Heart left ventricle (tissue), 16 donors: ENCODE measurements at regions of chr2 and their contacts with region 1.

Region 1: DNA sequence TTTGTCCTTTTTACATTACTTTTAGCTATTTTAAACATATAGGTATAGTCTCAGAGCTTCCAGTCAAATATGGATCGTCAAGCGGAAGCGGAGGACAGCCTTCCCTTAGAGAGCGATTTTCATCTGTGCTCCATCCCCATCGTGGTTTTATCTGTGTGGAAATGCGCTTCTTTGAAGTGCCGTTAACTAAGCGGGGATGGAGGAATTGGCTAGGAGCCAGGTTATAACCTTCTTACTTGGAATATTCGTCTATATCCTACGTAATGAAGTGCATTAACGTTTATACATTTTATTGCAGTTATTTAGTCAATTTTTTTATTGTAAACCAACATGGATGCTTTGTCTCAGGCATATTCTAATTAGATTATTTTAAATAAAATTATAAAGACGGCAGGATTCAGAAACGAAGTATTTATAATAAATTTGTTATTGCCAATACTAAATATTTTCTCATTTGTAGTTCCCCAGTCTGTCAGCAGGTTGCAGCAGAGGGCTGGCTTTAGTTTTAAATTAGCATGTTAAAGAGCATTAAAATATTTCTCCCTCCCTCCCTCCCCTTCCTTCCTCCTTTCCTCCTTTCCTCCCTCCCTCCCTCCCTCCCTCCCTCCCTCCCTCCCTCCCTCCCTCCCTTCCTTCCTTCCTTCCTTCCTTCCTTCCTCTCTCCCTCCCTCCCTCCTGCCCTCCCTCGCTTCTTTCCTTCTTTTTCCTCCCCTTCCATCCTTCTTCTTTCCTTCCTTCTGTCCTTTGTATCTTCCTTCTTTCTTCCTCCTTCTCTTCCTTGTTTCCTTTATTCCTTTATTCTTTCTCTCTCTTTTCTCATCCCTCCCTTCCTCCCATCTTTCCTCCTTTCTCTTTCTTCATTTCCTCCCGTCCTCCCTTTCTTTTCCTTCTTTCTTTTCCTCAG is 80.6 kb upstream of the DOCK10 start:
- DNase-seq: no peak
- ATAC-seq: no peak
- H3K4me3 ChIP-seq: no peak overlapping the region
- H3K27ac ChIP-seq: no peak overlapping the region
- H3K4me1 ChIP-seq: no peaks in the 10 kb centered on the region
- H3K27me3 ChIP-seq: no peaks in the 10 kb centered on the region
- CTCF ChIP-seq: peak in 9 of 12 donors; percentile 12 to 44 (median 27)
- POLR2A ChIP-seq: no peak

Region 2: DNA sequence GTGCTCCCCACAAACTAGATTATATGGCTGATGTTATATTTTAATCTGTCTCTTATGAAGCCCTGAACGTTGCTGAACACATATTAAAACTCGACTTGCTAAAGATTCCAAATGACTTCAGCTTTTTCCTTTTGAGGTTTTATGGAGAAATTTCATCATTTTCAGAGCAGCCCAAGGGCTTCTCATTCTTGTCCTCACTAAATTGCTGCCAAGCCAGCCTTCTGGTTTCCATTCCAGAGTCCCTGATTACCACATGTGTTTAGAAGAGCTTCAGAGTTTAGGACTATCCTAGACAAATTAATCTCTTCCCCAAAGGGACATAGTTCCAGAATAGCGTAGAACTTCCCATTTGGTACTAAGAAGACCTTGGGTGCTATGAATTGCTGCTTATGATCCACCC is 328.9 kb before region 1 on chr2:
- intact Hi-C with region 1: no loop called
- DNase-seq: peak in 3 of 5 donors; percentile 27 to 32 (median 31)
- ATAC-seq: peak; percentile 42 to 81 (median 78)
- H3K4me3 ChIP-seq: no peak overlapping the region
- H3K27ac ChIP-seq: peak overlapping the region in 1 of 12 donors; percentile 50
- H3K4me1 ChIP-seq: peaks cover 0 to 6% (median 0%) of the 10 kb centered on the region in 12 donors
- H3K27me3 ChIP-seq: no peaks in the 10 kb centered on the region
- CTCF ChIP-seq: no peak
- POLR2A ChIP-seq: no peak

Region 3: DNA sequence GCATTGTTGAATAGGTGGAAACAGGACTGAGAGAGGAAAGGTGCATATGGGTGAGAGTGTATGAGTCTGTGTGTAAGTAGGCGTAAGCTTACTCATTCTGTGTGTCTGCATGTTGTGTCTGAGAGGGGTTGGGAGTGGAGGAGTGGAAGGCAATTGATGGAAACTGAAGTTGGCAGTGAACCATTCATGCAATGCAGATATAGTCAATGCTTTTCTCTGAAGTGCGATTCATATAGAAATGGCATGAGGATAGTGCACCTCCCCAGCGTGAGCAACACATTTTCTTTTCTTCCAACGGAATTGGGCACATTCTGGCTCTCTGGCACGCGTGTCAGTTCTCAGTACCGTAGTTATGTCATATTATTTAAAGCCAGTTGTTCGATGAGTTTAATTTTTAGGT is 527.2 kb after region 1 on chr2:
- intact Hi-C with region 1: loop called in 2 of 10 experiments (anchors 5 to 10 kb)
- DNase-seq: no peak
- ATAC-seq: no peak
- H3K4me3 ChIP-seq: no peak overlapping the region
- H3K27ac ChIP-seq: no peak overlapping the region
- H3K4me1 ChIP-seq: no peaks in the 10 kb centered on the region
- H3K27me3 ChIP-seq: peaks cover 0 to 12% (median 0%) of the 10 kb centered on the region in 9 donors
- CTCF ChIP-seq: no peak
- POLR2A ChIP-seq: no peak

Region 4: GRCh38 chr2:225660262-225661131 is 537.7 kb after region 1 on chr2:
- intact Hi-C with region 1: loop called in 6 of 10 experiments (anchors 5 to 10 kb)
- DNase-seq: peak; percentile 38 to 76 (median 52)
- ATAC-seq: peak in 3 of 4 donors; percentile 48 to 71 (median 53)
- H3K4me3 ChIP-seq: no peak overlapping the region
- H3K27ac ChIP-seq: no peak overlapping the region
- H3K4me1 ChIP-seq: no peaks in the 10 kb centered on the region
- H3K27me3 ChIP-seq: peaks cover 0 to 33% (median 0%) of the 10 kb centered on the region in 9 donors
- CTCF ChIP-seq: peak; percentile 62 to 89 (median 80)
- POLR2A ChIP-seq: no peak